Dorsolateral prefrontal cortex (tissue), 120 donors: ENCODE measurements at regions of chr22 and their contacts with region 1.

Region 1: DNA sequence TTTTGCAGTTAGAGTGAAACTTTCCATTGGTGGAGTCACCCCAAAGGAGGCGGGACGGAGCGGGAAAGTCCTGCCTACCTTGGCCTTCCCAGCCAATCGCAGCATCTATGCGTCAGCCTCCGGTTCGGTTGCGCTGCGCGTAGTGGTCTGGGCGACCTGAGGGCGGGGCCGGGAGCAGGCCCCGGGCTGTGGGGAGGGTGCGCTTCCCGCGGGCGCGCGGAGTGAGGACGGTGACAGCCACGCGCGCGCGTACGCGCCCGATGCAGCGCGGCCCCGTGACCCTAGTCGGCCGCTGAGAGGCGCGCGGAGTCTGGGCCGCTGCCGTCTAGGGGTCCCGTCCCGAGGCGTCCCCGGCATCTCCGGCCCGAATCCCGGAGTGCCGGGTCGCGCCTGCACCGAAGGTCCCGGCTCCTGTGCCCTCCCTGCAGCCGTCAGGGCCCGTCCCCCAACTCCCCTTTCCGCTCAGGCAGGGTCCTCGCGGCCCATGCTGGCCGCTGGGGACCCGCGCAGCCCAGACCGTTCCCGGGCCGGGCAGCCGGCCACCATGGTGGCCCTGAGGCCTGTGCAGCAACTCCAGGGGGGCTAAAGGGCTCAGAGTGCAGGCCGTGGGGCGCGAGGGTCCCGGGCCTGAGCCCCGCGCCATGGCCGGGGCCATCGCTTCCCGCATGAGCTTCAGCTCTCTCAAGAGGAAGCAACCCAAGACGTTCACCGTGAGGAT is at the start of gene NF2:
- DNase-seq: peak; percentile 98 to 100 (median 100)
- H3K4me3 ChIP-seq: peak within 1 kb of the TSS; percentile 58 to 100 (median 96)
- H3K27ac ChIP-seq: peak within 1 kb of the TSS in 58 of 59 donors; percentile 58 to 98 (median 88)
- H3K27me3 ChIP-seq: no peaks in the 10 kb centered on the region
- CTCF ChIP-seq: peak in 32 of 56 donors; percentile 11 to 60 (median 30)
- total RNA-seq, gene NF2: 34.6 to 110 (median 73.5) TPM

Region 2: GRCh38 chr22:29553351-29554224 is 49.9 kb before region 1 on chr22 and contains the start of gene THOC5:
- intact Hi-C with region 1: loop called in 1 of 2 experiments (anchors 1 kb)
- DNase-seq: peak; percentile 88 to 98 (median 96)
- H3K4me3 ChIP-seq: peak within 1 kb of the TSS; percentile 68 to 95 (median 86)
- H3K27ac ChIP-seq: peak within 1 kb of the TSS; percentile 42 to 98 (median 92)
- H3K27me3 ChIP-seq: no peaks in the 10 kb centered on the region
- CTCF ChIP-seq: peak; percentile 61 to 94 (median 87)
- total RNA-seq, gene THOC5: 37.2 to 74.1 (median 51.8) TPM